MCF 10A (cell line): ENCODE measurements at regions of chr14 and their contacts with region 1.

Region 1: DNA sequence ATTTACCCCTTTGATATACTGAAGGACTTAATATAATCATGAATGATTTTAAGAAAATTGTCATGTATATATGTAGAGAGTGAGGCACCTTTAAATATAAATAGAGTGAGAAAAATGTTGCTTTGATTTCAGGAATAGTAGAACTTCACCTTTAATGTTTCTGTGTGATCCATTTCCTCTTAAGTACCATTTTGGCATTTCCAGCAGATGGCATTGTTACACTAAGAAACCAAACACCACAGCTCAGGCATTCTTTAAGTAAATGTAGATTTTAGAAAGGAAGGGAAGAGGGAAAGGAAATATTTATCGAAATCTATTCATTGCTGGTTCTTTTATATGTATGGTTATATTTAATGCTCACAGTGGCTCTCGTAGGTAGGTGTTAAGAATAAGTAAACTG is 556.7 kb upstream of the FBXO33 start:
- DNase-seq: peak; percentile 50
- H3K4me3 Mint-ChIP-seq: no peak overlapping the region
- H3K27ac Mint-ChIP-seq: no peak overlapping the region
- H3K4me1 Mint-ChIP-seq: no peaks in the 10 kb centered on the region
- H3K27me3 Mint-ChIP-seq: no peaks in the 10 kb centered on the region
- CTCF ChIP-seq: peak; percentile 54

Region 2: GRCh38 chr14:39491134-39491571 is 497.8 kb before region 1 on chr14:
- CTCF ChIA-PET with region 1: no interaction called
- POLR2A ChIA-PET with region 1: no interaction called
- intact Hi-C with region 1: loop called (anchors 2 kb)
- DNase-seq: peak; percentile 38
- H3K4me3 Mint-ChIP-seq: no peak overlapping the region
- H3K27ac Mint-ChIP-seq: no peak overlapping the region
- H3K4me1 Mint-ChIP-seq: peaks cover 12% of the 10 kb centered on the region
- H3K27me3 Mint-ChIP-seq: peaks cover 20% of the 10 kb centered on the region
- CTCF ChIP-seq: peak; percentile 32

Region 3: GRCh38 chr14:39957290-39957689 is 31.6 kb before region 1 on chr14:
- CTCF ChIA-PET with region 1: no interaction called
- POLR2A ChIA-PET with region 1: no interaction called
- intact Hi-C with region 1: no loop called
- DNase-seq: no peak
- H3K4me3 Mint-ChIP-seq: no peak overlapping the region
- H3K27ac Mint-ChIP-seq: no peak overlapping the region
- H3K4me1 Mint-ChIP-seq: no peaks in the 10 kb centered on the region
- H3K27me3 Mint-ChIP-seq: peaks cover 43% of the 10 kb centered on the region
- CTCF ChIP-seq: no peak

Region 4: DNA sequence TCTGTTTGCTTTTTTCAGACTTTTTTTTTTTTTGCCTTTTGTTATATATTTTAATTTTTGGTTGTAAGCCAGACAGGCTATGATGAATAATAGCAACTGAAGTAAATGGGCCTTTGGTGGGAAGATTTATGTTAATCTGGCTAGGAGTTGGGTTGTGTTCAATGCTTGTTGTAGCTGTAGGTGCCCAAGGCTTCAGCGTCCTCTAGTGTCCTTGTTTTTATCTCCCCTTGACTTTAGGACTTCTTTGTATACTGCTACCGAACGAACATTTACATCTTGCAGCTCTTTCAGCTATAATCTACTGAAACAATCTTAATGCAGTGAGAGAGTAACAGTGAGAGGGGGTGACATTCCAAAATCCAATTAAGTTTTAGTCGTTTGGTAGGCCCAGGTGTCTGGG is 291.7 kb after region 1 on chr14:
- CTCF ChIA-PET with region 1: no interaction called
- POLR2A ChIA-PET with region 1: no interaction called
- intact Hi-C with region 1: loop called (anchors 1 kb)
- DNase-seq: peak; percentile 2
- H3K4me3 Mint-ChIP-seq: no peak overlapping the region
- H3K27ac Mint-ChIP-seq: no peak overlapping the region
- H3K4me1 Mint-ChIP-seq: no peaks in the 10 kb centered on the region
- H3K27me3 Mint-ChIP-seq: no peaks in the 10 kb centered on the region
- CTCF ChIP-seq: no peak

Region 5: GRCh38 chr14:40417777-40418401 is 428.9 kb after region 1 on chr14:
- CTCF ChIA-PET with region 1: interaction called, 3 read pairs
- POLR2A ChIA-PET with region 1: no interaction called
- intact Hi-C with region 1: loop called (anchors 10 kb)
- DNase-seq: peak; percentile 61
- H3K4me3 Mint-ChIP-seq: no peak overlapping the region
- H3K27ac Mint-ChIP-seq: no peak overlapping the region
- H3K4me1 Mint-ChIP-seq: peaks cover 11% of the 10 kb centered on the region
- H3K27me3 Mint-ChIP-seq: no peaks in the 10 kb centered on the region
- CTCF ChIP-seq: peak; percentile 59

Region 6: DNA sequence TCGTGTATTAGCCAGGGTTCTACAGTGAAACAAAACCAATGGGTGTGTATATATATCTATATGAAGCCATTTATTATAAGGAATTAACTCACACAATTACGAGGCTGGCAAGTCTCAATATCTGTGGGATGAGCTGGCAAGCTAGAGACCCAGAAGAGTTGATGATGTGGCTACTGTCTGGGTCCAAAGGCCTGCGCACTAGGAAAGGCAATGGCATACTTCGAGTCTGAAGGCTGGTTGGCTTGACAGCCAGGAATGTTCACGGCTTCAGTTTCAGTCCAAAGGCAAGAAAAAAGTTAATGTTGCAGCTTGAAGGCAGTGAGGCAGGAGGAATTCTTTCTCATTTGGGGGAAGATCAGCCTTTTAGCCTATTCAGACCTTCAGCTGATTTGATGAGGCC is 724.4 kb after region 1 on chr14:
- CTCF ChIA-PET with region 1: no interaction called
- POLR2A ChIA-PET with region 1: no interaction called
- intact Hi-C with region 1: loop called (anchors 2 kb)
- DNase-seq: no peak
- H3K4me3 Mint-ChIP-seq: no peak overlapping the region
- H3K27ac Mint-ChIP-seq: no peak overlapping the region
- H3K4me1 Mint-ChIP-seq: no peaks in the 10 kb centered on the region
- H3K27me3 Mint-ChIP-seq: peaks cover 3% of the 10 kb centered on the region
- CTCF ChIP-seq: no peak

Region 7: GRCh38 chr14:41586237-41586636 is 1597.3 kb after region 1 on chr14:
- CTCF ChIA-PET with region 1: no interaction called
- POLR2A ChIA-PET with region 1: no interaction called
- intact Hi-C with region 1: loop called (anchors 10 kb)
- DNase-seq: no peak
- H3K4me3 Mint-ChIP-seq: no peak overlapping the region
- H3K27ac Mint-ChIP-seq: no peak overlapping the region
- H3K4me1 Mint-ChIP-seq: no peaks in the 10 kb centered on the region
- H3K27me3 Mint-ChIP-seq: peaks cover 44% of the 10 kb centered on the region
- CTCF ChIP-seq: no peak

Region 8: DNA sequence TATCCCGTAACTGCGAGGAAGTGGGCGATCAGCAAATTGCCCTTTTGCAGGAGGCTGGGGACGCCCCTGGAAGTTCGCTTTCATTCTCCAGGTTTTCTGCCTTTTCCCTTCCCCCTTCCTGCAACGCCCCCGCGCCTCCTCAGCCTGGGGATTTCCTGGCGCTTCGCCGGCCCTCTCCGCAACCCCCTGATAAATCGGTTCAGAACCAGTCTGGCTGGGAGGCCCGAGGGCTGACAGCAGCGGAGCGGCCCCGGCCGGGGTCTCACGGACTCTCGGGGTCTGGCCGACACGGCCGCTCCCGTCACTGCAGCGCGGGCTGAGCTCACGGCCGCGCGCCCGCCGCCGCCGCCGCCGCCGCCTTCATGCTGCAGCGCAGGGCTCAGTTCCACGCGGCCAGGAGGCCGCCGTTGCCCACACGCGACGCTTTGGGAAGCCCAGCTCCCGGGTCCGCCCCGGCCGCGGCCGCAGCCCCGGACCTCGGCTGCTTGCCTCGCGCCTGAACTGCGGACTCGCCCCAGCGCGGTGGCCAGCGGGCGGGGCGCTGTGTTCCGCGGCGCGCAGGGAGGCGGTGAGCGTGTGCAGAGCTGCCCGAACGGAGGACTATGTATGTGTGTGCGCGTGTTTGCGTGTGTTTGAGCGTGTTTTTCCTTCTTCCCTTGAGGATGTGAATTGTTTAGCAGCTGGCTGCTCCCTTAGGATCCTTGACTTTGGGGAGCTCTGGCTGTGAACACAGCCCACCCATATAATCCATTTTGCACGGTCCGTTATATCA is 1617.8 kb after region 1 on chr14 and contains the start of gene LRFN5:
- CTCF ChIA-PET with region 1: interaction called, 10 read pairs
- POLR2A ChIA-PET with region 1: no interaction called
- intact Hi-C with region 1: no loop called
- DNase-seq: no peak
- H3K4me3 Mint-ChIP-seq: no peak within 1 kb of the TSS
- H3K27ac Mint-ChIP-seq: no peak within 1 kb of the TSS
- H3K4me1 Mint-ChIP-seq: no peaks in the 10 kb centered on the region
- H3K27me3 Mint-ChIP-seq: peaks cover 91% of the 10 kb centered on the region
- CTCF ChIP-seq: no peak
- total RNA-seq, gene LRFN5: not detected in 2 replicates